ENCODE measurements at regions of chr3 and their contacts with region 1.

Region 1: GRCh38 chr3:184543843-184544512 is 17.6 kb upstream of the EPHB3 start:
- DNase-seq: no peak
- H3K4me3 ChIP-seq: no peak overlapping the region
- H3K27me3 ChIP-seq: peaks cover 11% of the 10 kb centered on the region
- CTCF ChIP-seq: peak; percentile 80

Region 2: GRCh38 chr3:184354121-184354728 is 189.8 kb before region 1 on chr3:
- CTCF ChIA-PET with region 1: interaction called, 11 read pairs
- POLR2A ChIA-PET with region 1: no interaction called
- DNase-seq: no peak
- H3K4me3 ChIP-seq: no peak overlapping the region
- H3K27me3 ChIP-seq: no peaks in the 10 kb centered on the region
- CTCF ChIP-seq: peak; percentile 88

Region 3: DNA sequence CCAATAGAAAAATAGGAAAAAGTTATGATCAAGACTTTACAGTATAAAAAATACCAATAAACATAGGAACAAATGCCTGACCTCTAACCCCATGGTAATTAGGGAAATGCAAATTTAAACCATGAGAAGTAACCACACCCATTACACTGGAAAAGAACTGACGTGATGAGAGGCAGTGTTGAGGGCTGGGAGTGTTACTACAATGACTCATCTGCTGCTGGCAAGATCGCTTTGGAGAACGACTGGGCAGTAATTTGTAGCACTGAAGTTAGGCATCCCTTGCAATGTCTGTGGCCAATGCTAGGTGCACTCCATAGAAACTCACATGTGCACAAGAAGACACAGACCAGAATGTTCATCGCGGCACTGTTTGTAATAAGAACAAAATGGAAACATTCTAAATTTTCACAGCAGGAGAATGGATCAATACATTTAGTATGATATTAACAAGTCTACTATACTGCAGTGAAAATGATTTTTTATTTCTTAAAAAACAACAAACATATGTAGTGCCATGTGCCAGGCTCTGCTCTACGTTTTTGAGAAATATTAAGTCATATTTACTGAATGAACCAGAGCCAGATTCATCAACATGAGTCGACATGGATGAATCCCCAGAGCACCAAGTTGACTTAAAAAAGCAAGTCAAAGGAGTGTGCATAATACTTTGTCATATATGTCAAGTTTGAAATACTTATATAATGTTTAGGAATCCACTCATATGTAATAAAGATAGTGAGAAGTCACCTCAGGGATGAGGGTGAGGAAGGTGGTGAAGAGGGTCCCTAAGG is 20.0 kb before region 1 on chr3:
- CTCF ChIA-PET with region 1: interaction called, 58 read pairs
- POLR2A ChIA-PET with region 1: no interaction called
- DNase-seq: no peak
- H3K4me3 ChIP-seq: no peak overlapping the region
- H3K27me3 ChIP-seq: peaks cover 10% of the 10 kb centered on the region
- CTCF ChIP-seq: no peak

Measured in BJ (cell line).